ENCODE measurements at regions of chr2 and their contacts with region 1.

Region 1: DNA sequence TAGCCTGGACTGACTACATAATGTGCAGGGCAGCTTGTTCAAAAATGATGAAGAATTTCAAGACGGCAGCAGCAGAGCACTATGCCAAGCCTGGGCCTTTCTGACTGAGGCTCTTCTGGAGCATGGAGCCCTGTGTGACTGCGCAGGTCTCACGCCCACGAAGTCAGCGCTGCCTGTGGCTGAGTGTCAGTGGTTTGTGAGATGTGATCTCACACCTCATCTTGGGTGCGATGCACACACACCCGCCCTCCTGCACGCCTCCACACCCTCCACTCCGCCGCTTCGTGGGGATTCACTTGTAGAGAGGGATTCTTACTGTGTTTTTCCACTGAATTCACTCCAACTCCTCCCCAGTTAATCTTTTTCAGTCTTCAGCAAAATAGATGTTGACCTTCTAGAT is 103.9 kb downstream of the VIT start:
- DNase-seq: peak; percentile 76 to 78
- ATAC-seq: peak; percentile 81 to 93 (median 92)
- H3K4me3 ChIP-seq: no peak overlapping the region
- H3K4me3 Mint-ChIP-seq: peak overlapping the region; percentile 81
- H3K27ac ChIP-seq: peak overlapping the region; percentile 85
- H3K27ac Mint-ChIP-seq: peak overlapping the region; percentile 91 to 95
- H3K4me1 ChIP-seq: peaks cover 77% of the 10 kb centered on the region
- H3K4me1 Mint-ChIP-seq: peaks cover 76 to 87% of the 10 kb centered on the region in 2 donors
- H3K27me3 ChIP-seq: no peaks in the 10 kb centered on the region
- H3K27me3 Mint-ChIP-seq: no peaks in the 10 kb centered on the region
- CTCF ChIP-seq: no peak

Region 2: GRCh38 chr2:36123995-36124394 is 676.4 kb before region 1 on chr2:
- intact Hi-C with region 1: no loop called
- DNase-seq: no peak
- ATAC-seq: no peak
- H3K4me3 ChIP-seq: no peak overlapping the region
- H3K4me3 Mint-ChIP-seq: no peak overlapping the region
- H3K27ac ChIP-seq: no peak overlapping the region
- H3K27ac Mint-ChIP-seq: no peak overlapping the region
- H3K4me1 ChIP-seq: no peaks in the 10 kb centered on the region
- H3K4me1 Mint-ChIP-seq: peaks cover 7 to 9% of the 10 kb centered on the region in 2 donors
- H3K27me3 ChIP-seq: no peaks in the 10 kb centered on the region
- H3K27me3 Mint-ChIP-seq: peaks cover 4 to 7% of the 10 kb centered on the region in 2 donors
- CTCF ChIP-seq: no peak

Region 3: DNA sequence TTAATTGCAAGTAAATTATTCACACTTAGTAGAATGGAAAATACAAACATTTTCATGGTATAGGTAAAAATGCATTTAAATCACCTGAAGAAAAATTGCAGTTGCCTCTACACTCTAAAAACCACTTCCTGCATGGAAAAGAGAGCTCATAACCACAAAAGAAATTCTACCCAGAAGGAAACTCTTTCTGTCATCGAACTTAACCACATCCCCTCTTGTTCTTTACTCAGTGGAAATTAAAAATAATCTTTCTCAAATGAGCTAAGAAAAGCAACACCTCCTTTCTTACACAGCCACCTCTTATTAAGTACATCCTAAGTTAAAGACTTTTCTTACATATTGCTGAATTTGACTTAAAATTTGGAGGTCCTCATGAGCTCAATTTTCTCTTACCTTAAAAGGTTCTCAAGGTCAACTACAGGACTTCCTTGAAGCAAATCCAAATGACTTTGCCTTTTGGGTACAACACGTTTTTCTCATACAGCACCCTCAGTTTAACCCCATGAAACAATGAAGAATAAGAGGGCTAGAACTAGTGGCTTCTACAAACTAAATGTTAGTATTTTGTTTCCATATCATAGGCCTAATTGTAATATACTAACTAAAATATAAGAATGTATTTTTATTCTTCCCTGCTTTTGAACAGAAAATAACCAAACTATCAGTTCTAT is 553.9 kb before region 1 on chr2:
- intact Hi-C with region 1: loop called (anchors 2 kb)
- DNase-seq: peak in 1 of 2 donors; percentile 70
- ATAC-seq: peak; percentile 60 to 83 (median 75)
- H3K4me3 ChIP-seq: no peak overlapping the region
- H3K4me3 Mint-ChIP-seq: peak overlapping the region; percentile 83
- H3K27ac ChIP-seq: peak overlapping the region; percentile 28
- H3K27ac Mint-ChIP-seq: peak overlapping the region; percentile 85 to 90
- H3K4me1 ChIP-seq: peaks cover 35% of the 10 kb centered on the region
- H3K4me1 Mint-ChIP-seq: peaks cover 74 to 76% of the 10 kb centered on the region in 2 donors
- H3K27me3 ChIP-seq: no peaks in the 10 kb centered on the region
- H3K27me3 Mint-ChIP-seq: no peaks in the 10 kb centered on the region
- CTCF ChIP-seq: no peak

Region 4: DNA sequence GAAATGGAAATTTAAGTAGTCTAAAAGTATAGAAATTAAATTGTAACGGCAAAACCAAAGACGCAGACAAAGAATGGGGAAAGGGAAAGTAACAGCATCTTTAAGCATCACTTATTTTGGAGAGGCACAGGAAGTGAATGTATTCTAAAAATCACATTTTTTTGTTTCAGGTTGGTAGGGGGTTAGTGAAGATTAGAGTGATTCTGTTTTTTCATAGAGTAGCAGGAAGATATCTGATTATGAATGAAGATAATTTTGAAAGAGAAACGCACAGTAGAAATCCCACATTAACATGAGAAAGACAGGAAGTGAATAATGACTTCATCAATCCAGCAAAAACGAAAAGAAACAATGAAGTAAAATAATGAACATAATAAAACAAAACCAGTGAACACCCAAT is 34.7 kb after region 1 on chr2:
- intact Hi-C with region 1: loop called (anchors 2 kb)
- DNase-seq: peak in 1 of 2 donors; percentile 20
- ATAC-seq: peak; percentile 82 to 92 (median 92)
- H3K4me3 ChIP-seq: no peak overlapping the region
- H3K4me3 Mint-ChIP-seq: peak overlapping the region; percentile 53
- H3K27ac ChIP-seq: peak overlapping the region; percentile 59
- H3K27ac Mint-ChIP-seq: peak overlapping the region; percentile 74 to 76
- H3K4me1 ChIP-seq: peaks cover 3% of the 10 kb centered on the region
- H3K4me1 Mint-ChIP-seq: peaks cover 11 to 14% of the 10 kb centered on the region in 2 donors
- H3K27me3 ChIP-seq: no peaks in the 10 kb centered on the region
- H3K27me3 Mint-ChIP-seq: no peaks in the 10 kb centered on the region
- CTCF ChIP-seq: no peak

Region 5: DNA sequence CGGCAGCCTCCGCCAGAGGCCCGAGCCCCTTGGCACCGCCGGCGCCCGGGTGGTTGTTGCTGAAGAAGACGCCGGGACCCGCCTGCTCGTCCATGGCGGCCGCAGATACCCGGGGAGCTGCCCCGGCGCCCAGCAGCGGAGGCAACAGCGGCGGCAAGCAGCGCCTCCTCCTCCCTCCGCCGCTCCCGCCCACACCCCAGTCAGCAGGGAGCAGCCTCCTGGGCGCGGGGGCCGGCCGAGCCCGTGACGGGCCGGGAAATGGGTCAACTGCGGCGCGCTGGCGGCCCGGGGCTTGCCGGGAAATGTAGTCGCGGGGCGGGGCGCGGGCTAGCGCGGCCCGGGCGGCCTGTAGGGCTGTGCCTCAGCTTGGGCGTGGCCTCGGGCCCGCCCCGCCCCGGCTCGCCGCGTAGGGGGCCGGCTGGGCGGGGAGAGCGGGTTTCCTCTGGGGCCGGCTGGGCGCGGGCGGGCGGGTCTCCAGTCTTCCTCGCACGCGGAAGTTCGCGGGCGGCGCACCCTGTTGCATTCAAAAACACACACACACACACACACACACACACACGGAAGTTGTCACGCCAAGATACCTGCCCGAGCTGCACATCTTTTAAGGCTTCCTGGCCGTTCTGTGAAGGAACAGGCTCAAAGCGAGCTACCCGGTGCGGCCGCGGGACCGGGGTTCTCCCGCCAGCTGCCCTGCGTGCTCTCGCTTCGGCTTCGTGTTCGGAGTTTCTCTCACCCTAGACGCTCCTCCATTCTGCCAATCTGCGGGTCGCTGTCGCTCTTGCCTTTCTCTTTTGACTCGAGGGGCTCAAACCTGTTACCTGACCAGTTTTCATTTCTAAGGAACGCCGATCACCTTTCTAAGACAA is 166.2 kb after region 1 on chr2 and contains the start of gene STRN:
- intact Hi-C with region 1: loop called (anchors 5 kb)
- DNase-seq: peak; percentile 98
- ATAC-seq: peak; percentile 91 to 98 (median 91)
- H3K4me3 ChIP-seq: peak within 1 kb of the TSS; percentile 95
- H3K4me3 Mint-ChIP-seq: peak within 1 kb of the TSS; percentile 96
- H3K27ac ChIP-seq: peak within 1 kb of the TSS; percentile 96
- H3K27ac Mint-ChIP-seq: peak within 1 kb of the TSS; percentile 98
- H3K4me1 ChIP-seq: peaks cover 13% of the 10 kb centered on the region
- H3K4me1 Mint-ChIP-seq: peaks cover 46 to 55% of the 10 kb centered on the region in 2 donors
- H3K27me3 ChIP-seq: no peaks in the 10 kb centered on the region
- H3K27me3 Mint-ChIP-seq: no peaks in the 10 kb centered on the region
- CTCF ChIP-seq: no peak
- total RNA-seq, gene STRN: 43.1 to 49.9 (median 43.4) TPM

Region 6: DNA sequence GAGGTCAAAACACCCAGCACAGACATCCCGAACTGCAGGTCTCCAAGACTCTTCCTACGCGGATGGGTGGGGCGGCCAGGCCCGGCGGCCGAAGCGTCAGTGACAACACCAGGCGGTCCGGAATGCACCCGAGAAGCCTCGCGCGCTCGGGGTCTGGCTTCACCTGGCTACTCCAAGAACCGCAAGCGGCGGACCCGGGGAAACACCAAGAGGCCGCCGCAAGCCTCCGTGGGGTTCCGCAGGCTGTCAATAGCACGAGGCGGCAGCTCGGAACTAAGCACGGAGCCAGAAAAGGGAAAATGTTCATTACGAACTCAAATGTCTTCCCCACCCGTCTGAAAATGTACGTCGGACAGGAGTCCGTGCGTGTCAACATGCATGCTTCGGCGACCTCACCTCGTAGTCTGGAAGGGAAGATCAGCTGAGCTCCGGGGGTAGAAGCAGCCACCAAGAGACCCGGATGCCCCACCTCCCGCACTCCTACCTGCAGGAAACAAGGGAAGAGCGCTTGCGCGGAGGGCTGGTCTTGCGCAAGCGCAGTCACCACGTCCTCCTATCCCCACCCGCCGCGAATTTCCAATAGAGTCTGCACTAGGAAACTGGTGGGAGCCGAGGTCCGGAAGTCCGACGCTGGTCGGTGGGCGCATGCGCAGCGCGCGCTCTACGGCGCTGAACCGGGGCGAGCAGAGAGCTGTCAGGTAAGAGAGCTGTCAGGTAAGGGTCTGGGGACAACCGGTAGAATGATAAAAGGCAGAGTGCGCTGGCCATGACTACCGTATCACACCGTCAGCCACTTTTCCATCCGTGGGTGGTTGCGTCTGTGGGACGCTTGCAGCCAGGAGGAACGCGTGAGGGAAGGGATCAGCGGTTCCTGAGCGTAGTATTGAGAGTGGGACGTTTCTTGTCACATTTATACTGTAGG is 283.8 kb after region 1 on chr2 and contains the starts of genes GPATCH11 and HEATR5B:
- intact Hi-C with region 1: loop called (anchors 10 kb)
- DNase-seq: peak; percentile 72 to 98
- ATAC-seq: peak; percentile 71 to 80 (median 76)
- H3K4me3 ChIP-seq: peak within 1 kb of the TSS; percentile 85
- H3K4me3 Mint-ChIP-seq: no peak within 1 kb of the TSS
- H3K27ac ChIP-seq: peak within 1 kb of the TSS; percentile 70
- H3K27ac Mint-ChIP-seq: no peak within 1 kb of the TSS
- H3K4me1 ChIP-seq: peaks cover 22% of the 10 kb centered on the region
- H3K4me1 Mint-ChIP-seq: peaks cover 39% of the 10 kb centered on the region in 2 donors
- H3K27me3 ChIP-seq: no peaks in the 10 kb centered on the region
- H3K27me3 Mint-ChIP-seq: no peaks in the 10 kb centered on the region
- CTCF ChIP-seq: no peak
- total RNA-seq, gene GPATCH11: 6.5 to 18.2 (median 8.6) TPM
- total RNA-seq, gene HEATR5B: 31.1 to 53.9 (median 39.9) TPM

Measured in natural killer cell (primary cell).